Cardiac septum (tissue), 1 donor: ENCODE measurements at regions of chr11 and their contacts with region 1.

Region 1: DNA sequence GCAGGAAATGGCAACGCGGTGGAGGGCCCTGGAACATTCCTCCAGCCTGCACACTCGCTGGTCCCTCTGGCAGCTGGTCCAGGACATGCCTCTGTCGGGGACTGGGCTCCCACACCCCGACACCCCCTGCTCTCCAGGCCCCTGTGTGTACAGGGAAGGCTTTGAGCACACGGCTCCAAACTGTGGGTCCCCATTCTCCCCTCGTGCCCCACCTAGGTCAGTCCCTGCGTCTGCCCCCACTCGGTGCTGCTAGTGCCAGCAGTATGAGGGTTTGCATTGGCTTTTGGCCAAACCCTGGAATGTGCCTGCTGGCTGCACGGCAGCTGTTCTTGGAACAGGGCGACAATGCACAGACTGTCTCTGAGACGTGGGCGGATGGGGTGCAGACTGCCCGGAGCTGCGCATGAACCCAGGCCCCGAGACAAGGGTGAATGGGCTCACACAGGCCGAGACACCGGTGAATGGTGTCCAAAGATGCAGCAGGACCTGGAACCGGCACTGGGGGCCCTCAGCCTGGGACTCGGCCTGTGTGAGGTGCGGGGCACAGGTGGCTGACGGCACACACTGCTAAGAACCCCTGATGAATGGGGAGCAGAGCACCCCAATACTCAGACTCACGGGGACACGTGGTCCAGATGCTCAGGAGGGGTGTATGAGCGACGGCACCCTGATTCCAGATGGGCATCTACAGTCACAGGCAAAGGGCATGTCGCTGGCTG is 7.5 kb upstream of the SYT8 start:
- DNase-seq: no peak

Region 2: GRCh38 chr11:1714973-1715885 is 112.0 kb before region 1 on chr11:
- intact Hi-C with region 1: loop called (anchors 5 kb)
- DNase-seq: peak; percentile 74

Region 3: DNA sequence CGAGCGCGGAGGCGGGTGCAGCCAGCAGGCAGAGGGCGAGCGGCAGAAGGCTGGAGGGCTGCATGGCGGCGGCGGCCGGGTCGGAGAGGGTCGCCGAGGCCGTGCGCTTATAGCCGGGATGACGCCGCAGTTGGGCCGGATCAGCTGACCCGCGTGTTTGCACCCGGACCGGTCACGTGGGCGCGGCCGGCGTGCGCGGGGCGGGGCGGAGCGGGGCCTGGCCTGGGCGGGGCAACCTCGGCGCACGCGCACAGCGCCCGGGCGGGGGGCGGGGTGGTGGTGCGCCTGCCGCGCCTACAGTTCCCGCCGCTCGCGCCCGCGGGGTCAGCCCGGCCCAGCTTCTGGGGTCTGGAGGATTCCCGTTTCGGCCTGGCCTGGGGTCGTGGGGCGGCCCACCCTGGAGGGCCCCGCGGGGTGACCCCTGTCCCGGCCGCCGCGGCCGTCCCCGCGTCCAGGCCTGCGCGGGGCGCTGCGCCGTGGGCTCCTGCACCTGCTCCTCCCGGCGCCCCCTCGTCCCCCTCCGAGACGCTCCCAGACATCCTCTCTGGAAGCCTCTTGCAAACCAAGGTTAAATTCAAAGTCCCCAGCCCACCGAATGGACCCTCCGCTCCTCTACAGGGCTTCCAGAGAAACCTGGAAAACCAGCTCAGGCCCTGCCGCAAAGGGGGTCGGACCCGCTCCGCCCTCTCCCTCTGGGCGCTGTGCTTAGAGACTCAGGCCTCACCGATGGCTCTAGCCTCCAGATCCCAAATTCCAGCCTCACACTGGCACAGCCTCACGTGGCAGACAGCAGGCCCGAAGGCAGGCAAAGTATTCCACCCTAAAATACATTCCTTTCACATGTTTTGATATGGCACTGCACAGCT is 63.2 kb before region 1 on chr11 and contains the start of gene CTSD:
- intact Hi-C with region 1: loop called (anchors 5 kb)
- DNase-seq: peak; percentile 97
- total RNA-seq, gene CTSD: 521 TPM

Region 4: DNA sequence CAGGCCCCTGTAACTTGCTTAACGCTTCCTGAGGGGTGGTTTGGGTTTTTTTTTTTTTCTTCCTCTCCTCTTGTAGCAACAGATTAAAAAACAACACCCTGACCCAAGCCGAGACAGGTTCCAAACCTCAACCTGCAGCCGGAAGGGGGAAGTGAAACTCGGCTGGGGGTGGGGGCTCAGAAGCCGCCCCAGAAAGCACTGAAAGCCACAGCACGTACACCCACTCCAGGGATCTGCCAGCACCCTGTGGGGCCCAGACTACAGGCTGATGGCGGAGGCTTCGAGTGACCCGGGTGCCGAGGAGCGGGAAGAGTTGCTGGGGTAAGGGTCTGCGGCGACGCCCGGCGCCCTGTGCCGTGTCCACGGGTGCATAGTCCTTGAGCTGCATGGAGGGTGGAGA is 25.6 kb after region 1 on chr11 and contains the start of gene LSP1:
- intact Hi-C with region 1: no loop called
- DNase-seq: peak; percentile 88
- total RNA-seq, gene LSP1: 35.1 TPM

Region 5: DNA sequence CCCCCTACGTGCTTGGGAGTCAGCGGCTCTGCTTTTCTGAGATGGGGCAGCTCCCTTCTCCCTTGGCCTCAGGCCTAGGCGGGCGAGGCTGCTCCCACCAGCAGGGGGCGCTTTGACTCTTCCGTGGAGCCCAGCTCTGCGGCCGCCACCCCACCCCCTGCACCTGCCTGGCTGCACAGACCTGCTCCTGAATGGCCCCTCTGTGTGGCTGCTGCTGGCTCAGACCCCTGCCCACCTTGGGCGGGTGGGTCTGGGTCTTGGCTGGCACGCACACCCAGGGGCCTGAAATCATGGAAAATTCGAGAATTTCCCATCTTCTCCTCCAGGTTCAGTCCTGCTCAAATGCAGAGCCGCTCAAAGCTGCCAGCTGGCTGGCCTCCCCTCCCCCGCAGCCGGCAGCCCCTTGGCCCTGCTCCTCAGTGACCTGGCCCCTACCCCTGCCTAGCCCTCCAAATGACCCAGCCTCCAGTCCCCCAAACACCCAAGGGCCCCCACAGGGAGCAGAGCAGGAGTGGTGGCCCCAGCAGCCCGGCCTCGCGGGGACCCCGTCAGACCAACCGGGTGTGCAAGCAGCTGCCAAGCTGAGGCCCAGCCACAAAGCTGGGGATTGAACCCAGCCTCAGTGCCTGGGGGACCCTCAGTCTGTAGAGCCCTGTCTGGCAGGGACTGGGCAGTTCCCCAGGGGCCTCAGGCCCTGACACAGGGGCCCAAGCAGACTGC is 55.4 kb after region 1 on chr11:
- intact Hi-C with region 1: no loop called
- DNase-seq: peak; percentile 92

Region 6: DNA sequence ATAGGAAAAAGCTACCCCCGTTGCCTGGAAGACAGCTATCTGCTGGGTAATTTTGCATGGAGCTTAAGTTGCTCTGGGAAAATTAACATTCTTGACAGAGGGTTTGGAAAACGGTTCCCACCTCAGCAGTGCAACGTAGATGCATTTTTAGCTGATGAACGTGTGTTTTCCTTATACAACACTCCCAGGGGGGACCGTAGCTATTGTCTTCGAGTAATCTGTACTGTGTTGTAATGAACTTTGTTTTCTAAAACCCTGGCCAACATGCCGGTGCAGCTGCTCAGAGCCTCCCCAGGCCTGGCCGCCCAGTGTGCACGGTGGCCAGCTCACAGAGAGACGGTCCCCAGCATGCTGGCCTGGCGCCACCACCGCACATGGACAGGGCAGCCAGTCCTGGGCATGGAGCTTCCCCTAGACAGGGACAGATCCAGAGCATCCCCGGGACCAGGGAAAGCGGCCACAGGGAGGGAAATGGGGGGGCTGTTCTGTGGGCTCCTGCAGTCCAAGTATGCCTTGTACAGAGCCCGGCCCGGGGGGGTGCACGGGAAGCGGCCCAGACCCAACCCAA is 94.4 kb after region 1 on chr11:
- intact Hi-C with region 1: no loop called
- DNase-seq: no peak